ENCODE measurements at regions of chr20 and their contacts with region 1.

Region 1: DNA sequence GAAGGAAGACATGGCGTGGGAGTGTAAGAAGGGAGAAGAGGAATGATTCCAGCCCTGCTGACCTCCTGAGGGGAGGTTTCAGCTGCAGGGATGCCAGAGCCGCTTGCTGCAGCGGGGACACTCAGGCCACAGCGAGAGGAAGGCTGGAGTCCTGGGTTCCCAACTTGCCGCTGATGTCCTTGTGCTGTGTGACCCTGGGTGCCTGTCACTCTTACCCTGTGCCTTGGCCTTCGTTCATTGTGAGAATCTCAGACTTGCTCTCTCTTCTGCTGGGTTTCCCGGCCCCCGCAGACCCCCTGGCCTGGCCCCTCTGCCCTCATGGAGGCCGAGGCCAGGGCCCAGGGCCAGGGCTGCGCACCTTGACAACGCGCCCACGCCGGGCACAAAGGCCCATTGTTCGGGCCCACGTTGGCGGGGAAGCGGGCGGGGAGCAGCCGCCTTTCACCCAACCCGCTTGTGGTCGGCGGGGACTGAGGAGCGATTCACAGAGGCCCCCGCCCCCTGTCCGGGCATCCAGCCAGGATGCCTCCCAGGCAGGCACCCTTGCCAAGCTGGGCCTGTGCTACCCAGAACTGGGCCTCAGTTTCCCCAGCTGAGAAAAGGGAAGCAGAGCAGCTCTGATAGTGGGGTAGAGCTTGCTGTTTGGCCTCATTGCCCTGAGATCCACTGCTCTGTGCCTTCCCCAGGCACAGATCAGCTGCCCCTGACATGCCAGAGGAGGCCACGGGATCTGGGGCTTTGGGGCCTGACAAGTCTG is 52.4 kb downstream of the CEBPB start:
- DNase-seq: no peak
- ATAC-seq: peak; percentile 78
- H3K4me3 ChIP-seq: no peak overlapping the region
- H3K27ac ChIP-seq: peak overlapping the region; percentile 69
- H3K4me1 ChIP-seq: peaks cover 36% of the 10 kb centered on the region
- H3K27me3 ChIP-seq: no peaks in the 10 kb centered on the region
- CTCF ChIP-seq: no peak

Region 2: GRCh38 chr20:50085452-50086365 is 157.3 kb before region 1 on chr20:
- CTCF ChIA-PET with region 1: interaction called, 12 read pairs
- POLR2A ChIA-PET with region 1: no interaction called
- in situ Hi-C with region 1: no loop called
- intact Hi-C with region 1: no loop called
- DNase-seq: no peak
- ATAC-seq: peak; percentile 88
- H3K4me3 ChIP-seq: peak overlapping the region in 1 of 2 experiments; percentile 19; a peak in 2 of 4 replicates
- H3K27ac ChIP-seq: peak overlapping the region; percentile 87
- H3K4me1 ChIP-seq: peaks cover 26% of the 10 kb centered on the region
- H3K27me3 ChIP-seq: no peaks in the 10 kb centered on the region
- CTCF ChIP-seq: peak; percentile 93

Region 3: GRCh38 chr20:50193851-50194830 is 48.9 kb before region 1 on chr20:
- CTCF ChIA-PET with region 1: no interaction called
- POLR2A ChIA-PET with region 1: no interaction called
- in situ Hi-C with region 1: no loop called
- intact Hi-C with region 1: no loop called
- DNase-seq: no peak
- ATAC-seq: no peak
- H3K4me3 ChIP-seq: peak overlapping the region; percentile 89 to 97
- H3K27ac ChIP-seq: peak overlapping the region; percentile 97
- H3K4me1 ChIP-seq: peaks cover 37% of the 10 kb centered on the region
- H3K27me3 ChIP-seq: no peaks in the 10 kb centered on the region
- CTCF ChIP-seq: no peak

Region 4: GRCh38 chr20:50227506-50228172 is 15.4 kb before region 1 on chr20:
- CTCF ChIA-PET with region 1: interaction called, 6 read pairs
- POLR2A ChIA-PET with region 1: interaction called, 18 read pairs
- in situ Hi-C with region 1: no loop called
- intact Hi-C with region 1: no loop called
- DNase-seq: no peak
- ATAC-seq: no peak
- H3K4me3 ChIP-seq: no peak overlapping the region
- H3K27ac ChIP-seq: no peak overlapping the region
- H3K4me1 ChIP-seq: no peaks in the 10 kb centered on the region
- H3K27me3 ChIP-seq: no peaks in the 10 kb centered on the region
- CTCF ChIP-seq: no peak

Region 5: DNA sequence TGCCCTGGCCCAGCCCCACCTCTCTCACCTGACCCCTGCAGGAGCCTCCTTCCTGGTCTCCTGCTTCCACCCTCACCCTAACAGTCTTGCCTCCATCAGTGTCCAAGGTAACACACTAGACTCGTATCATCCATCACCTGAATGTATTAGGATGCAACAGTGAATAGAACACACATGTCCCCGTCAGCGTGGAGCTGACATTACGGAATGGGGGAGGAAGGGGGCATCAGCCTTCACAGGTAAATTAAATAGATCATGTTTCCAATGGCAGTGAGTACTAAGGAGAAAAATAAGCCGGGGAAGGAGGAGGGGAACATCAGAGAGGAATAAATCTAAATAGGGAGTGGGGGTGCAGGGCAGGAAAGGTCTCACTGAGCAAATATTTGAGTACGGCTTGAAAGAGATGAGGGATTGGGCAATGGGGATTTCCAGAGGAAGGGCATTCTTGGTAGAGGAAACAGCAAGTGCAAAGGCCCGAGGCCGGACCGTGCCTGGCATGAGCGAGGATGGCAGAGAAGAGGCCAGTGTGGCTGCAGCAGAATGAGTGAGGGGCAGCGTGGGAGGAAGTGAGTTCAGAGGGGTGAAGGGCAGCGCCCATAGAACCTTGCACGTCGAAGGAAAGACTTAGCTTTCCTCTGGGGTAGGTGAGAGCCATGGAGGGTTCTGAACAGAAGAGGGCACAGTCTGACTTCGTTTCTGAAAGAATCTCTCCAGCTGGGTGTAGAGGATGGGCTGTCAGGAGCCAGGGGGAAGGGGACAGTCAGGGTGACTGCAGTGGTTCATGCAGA is 157.1 kb after region 1 on chr20:
- CTCF ChIA-PET with region 1: no interaction called
- POLR2A ChIA-PET with region 1: no interaction called
- in situ Hi-C with region 1: no loop called
- intact Hi-C with region 1: no loop called
- DNase-seq: no peak
- ATAC-seq: peak; percentile 55
- H3K4me3 ChIP-seq: no peak overlapping the region
- H3K27ac ChIP-seq: no peak overlapping the region
- H3K4me1 ChIP-seq: peaks cover 17% of the 10 kb centered on the region
- H3K27me3 ChIP-seq: no peaks in the 10 kb centered on the region
- CTCF ChIP-seq: no peak

Measured in Panc1 (cell line).